Calu3 (cell line): ENCODE measurements at regions of chr1 and their contacts with region 1.

Region 1: DNA sequence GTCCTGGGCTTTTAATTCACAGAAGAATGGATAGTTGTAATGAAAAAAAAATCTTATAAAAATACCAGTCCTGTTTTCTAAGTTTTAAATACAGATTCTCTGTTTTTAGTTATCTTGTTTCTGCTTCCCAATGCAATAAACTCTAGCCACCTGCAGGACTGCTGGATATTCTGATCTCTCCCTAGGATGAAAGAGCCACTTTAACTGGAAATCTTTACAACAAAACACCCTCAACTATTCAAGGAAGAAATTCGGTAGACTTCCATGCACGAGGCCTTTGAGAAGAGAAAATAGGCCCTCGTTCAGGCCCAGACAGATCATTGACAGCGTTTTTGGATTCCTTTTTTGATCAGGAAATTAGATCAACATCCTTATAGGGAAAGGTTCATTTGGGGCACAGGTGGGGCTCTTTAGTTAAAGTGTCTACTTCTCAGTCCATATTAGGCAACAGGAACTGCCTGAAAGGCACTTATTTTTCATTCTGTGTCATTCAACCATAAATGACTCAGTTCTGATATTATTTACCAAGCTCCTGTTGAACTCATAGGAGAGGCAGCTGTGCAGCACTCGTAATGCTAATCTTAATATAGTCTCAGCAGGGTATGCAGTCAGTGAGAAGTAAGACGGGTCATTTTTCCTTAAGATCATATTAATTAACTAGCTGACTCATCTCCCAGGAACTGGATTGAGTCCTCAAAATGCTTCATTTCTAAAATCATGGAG is 71.1 kb upstream of the ERRFI1 start:
- DNase-seq: peak; percentile 50
- H3K4me3 Mint-ChIP-seq: peak overlapping the region; percentile 24
- H3K27ac Mint-ChIP-seq: peak overlapping the region; percentile 91
- H3K4me1 Mint-ChIP-seq: peaks cover 56% of the 10 kb centered on the region
- H3K27me3 Mint-ChIP-seq: no peaks in the 10 kb centered on the region
- CTCF ChIP-seq: no peak

Region 2: GRCh38 chr1:8047681-8048445 is 49.4 kb before region 1 on chr1:
- CTCF ChIA-PET with region 1: no interaction called
- intact Hi-C with region 1: loop called (anchors 5 kb)
- DNase-seq: no peak
- H3K4me3 Mint-ChIP-seq: no peak overlapping the region
- H3K27ac Mint-ChIP-seq: peak overlapping the region; percentile 98
- H3K4me1 Mint-ChIP-seq: peaks cover 18% of the 10 kb centered on the region
- H3K27me3 Mint-ChIP-seq: no peaks in the 10 kb centered on the region
- CTCF ChIP-seq: no peak

Region 3: GRCh38 chr1:8121261-8122170 is 24.3 kb after region 1 on chr1:
- CTCF ChIA-PET with region 1: interaction called, 10 read pairs
- intact Hi-C with region 1: loop called (anchors 1 kb)
- DNase-seq: peak; percentile 78
- H3K4me3 Mint-ChIP-seq: peak overlapping the region; percentile 28
- H3K27ac Mint-ChIP-seq: peak overlapping the region; percentile 98
- H3K4me1 Mint-ChIP-seq: peaks cover 47% of the 10 kb centered on the region
- H3K27me3 Mint-ChIP-seq: no peaks in the 10 kb centered on the region
- CTCF ChIP-seq: no peak

Region 4: GRCh38 chr1:8169364-8170058 is 72.3 kb after region 1 on chr1:
- CTCF ChIA-PET with region 1: no interaction called
- intact Hi-C with region 1: loop called (anchors 5 kb)
- DNase-seq: peak; percentile 58
- H3K4me3 Mint-ChIP-seq: peak overlapping the region; percentile 25
- H3K27ac Mint-ChIP-seq: peak overlapping the region; percentile 93
- H3K4me1 Mint-ChIP-seq: peaks cover 13% of the 10 kb centered on the region
- H3K27me3 Mint-ChIP-seq: no peaks in the 10 kb centered on the region
- CTCF ChIP-seq: no peak

Region 5: GRCh38 chr1:8259498-8260290 is 162.5 kb after region 1 on chr1:
- CTCF ChIA-PET with region 1: no interaction called
- intact Hi-C with region 1: loop called (anchors 5 kb)
- DNase-seq: peak; percentile 66
- H3K4me3 Mint-ChIP-seq: peak overlapping the region; percentile 10
- H3K27ac Mint-ChIP-seq: peak overlapping the region; percentile 82
- H3K4me1 Mint-ChIP-seq: peaks cover 38% of the 10 kb centered on the region
- H3K27me3 Mint-ChIP-seq: no peaks in the 10 kb centered on the region
- CTCF ChIP-seq: no peak